ENCODE measurements at regions of chr12 and their contacts with region 1.

Region 1: GRCh38 chr12:104877123-104877705 is 80.9 kb downstream of the SLC41A2 start:
- DNase-seq: peak in 4 of 5 donors; percentile 27 to 31 (median 30)
- H3K4me3 ChIP-seq: no peak overlapping the region
- H3K4me3 Mint-ChIP-seq: no peak overlapping the region
- H3K27ac ChIP-seq: no peak overlapping the region
- H3K27ac Mint-ChIP-seq: no peak overlapping the region
- H3K4me1 ChIP-seq: no peaks in the 10 kb centered on the region
- H3K4me1 Mint-ChIP-seq: peaks cover 0 to 2% (median 0%) of the 10 kb centered on the region in 4 donors
- H3K27me3 ChIP-seq: no peaks in the 10 kb centered on the region
- H3K27me3 Mint-ChIP-seq: no peaks in the 10 kb centered on the region

Region 2: GRCh38 chr12:104201238-104202001 is 675.8 kb before region 1 on chr12:
- CTCF ChIA-PET with region 1: no interaction called
- POLR2A ChIA-PET with region 1: no interaction called
- intact Hi-C with region 1: loop called (anchors 1 kb)
- DNase-seq: peak; percentile 59 to 69 (median 65)
- H3K4me3 ChIP-seq: no peak overlapping the region
- H3K4me3 Mint-ChIP-seq: peak overlapping the region in 2 of 8 donors; percentile 3 to 22
- H3K27ac ChIP-seq: no peak overlapping the region
- H3K27ac Mint-ChIP-seq: no peak overlapping the region
- H3K4me1 ChIP-seq: no peaks in the 10 kb centered on the region
- H3K4me1 Mint-ChIP-seq: peaks cover 2 to 4% (median 3%) of the 10 kb centered on the region in 4 donors
- H3K27me3 ChIP-seq: no peaks in the 10 kb centered on the region
- H3K27me3 Mint-ChIP-seq: peaks cover 7 to 8% of the 10 kb centered on the region in 2 donors

Region 3: DNA sequence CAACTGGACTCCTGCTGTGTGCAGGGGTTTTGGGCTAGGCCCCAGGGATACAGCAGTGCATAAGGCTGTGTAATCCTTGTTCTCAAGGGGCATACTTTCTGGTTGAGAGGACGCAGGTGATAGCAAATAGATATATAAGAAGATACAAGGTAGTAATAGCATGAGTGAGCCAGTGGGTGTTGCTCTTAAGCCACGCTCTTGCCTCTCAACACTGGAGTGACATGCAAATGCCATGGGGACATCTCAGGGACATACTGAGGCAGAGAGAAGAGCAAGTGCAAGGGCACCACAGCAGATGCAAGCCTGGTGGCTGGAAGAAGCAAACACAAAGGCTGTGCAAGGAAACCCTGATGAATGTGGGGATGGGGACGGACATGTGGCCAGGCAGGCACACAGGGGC is 197.1 kb before region 1 on chr12:
- CTCF ChIA-PET with region 1: no interaction called
- POLR2A ChIA-PET with region 1: no interaction called
- intact Hi-C with region 1: loop called (anchors 1 kb)
- DNase-seq: peak in 4 of 5 donors; percentile 36 to 51 (median 39)
- H3K4me3 ChIP-seq: no peak overlapping the region
- H3K4me3 Mint-ChIP-seq: peak overlapping the region in 3 of 8 donors; percentile 14 to 45 (median 17)
- H3K27ac ChIP-seq: no peak overlapping the region
- H3K27ac Mint-ChIP-seq: peak overlapping the region in 5 of 7 donors; percentile 2 to 86 (median 82)
- H3K4me1 ChIP-seq: peaks cover 53% of the 10 kb centered on the region
- H3K4me1 Mint-ChIP-seq: peaks cover 48 to 83% (median 65%) of the 10 kb centered on the region in 4 donors
- H3K27me3 ChIP-seq: no peaks in the 10 kb centered on the region
- H3K27me3 Mint-ChIP-seq: no peaks in the 10 kb centered on the region